Activated T-helper 1 cell treated with anti-CD3 and anti-CD28 coated beads, Interleukin-12 subunit alpha, Interleukin-12 subunit beta, Interleukin-2, Interleukin-4 antibody, amounts not matched to agents 30 ng/mL and 10 ng/mL and 1 ng/mL, durations not matched to agents 14 hours and 24 hours and 36 hours (primary cell): ENCODE measurements at regions of chr15 and their contacts with region 1.

Region 1: DNA sequence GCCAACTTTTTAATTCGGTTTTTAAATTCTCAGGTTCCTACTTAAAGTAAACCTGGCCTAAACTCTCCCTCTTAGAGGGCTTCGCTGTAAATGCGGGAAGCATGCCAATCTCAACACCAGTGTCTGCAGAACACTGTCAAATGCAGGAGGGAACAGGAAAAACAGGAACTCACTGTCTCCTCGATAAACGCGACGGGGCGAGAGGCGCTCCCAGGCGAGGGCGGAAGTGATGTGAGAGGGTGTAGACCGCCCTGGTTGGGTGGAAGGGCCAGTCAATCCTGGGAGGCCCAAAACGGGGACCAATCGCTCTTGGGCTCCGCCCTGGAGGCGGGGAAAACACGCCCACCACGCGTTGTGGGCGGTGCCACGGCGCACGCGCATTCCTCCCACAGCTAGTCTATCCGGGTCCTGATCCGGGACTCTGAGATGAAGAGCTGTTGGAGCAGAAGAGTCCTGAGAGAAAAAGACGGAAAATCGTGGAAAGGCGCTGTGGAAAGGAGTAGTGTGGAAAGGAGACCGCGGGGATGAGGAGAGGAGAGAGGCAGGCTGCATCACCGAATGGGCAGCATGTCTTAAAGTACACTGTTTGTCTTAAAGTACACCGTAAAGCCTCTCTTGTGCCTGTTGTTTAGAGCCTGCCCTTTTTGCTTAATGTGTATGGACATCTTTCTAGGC is 27.1 kb downstream of the SLC28A2 start:
- DNase-seq: peak; percentile 95
- H3K4me3 Mint-ChIP-seq: peak overlapping the region; percentile 90
- H3K27ac Mint-ChIP-seq: peak overlapping the region; percentile 77
- H3K4me1 Mint-ChIP-seq: peaks cover 7% of the 10 kb centered on the region
- H3K27me3 Mint-ChIP-seq: peaks cover 12% of the 10 kb centered on the region

Region 2: DNA sequence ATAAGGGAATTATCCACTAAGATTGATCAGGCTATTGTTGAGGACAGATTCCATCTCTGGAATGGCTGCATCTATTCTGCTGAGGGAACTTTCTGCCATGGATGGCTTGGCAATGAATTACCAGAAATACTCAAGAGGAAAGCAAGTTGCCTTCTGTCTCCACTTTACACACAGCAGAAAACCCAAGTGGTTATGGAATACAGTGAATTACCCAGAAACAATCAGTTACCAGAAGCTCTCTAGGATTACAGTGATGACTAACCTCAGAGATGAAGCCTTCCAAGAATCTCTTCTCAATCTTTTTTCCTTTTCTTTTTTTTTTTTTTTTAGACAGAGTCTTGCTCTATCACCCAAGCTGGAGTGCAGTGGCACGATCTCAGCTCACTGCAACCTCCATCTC is 1269.1 kb before region 1 on chr15:
- intact Hi-C with region 1: no loop called
- DNase-seq: no peak
- H3K4me3 Mint-ChIP-seq: no peak overlapping the region
- H3K27ac Mint-ChIP-seq: no peak overlapping the region
- H3K4me1 Mint-ChIP-seq: no peaks in the 10 kb centered on the region
- H3K27me3 Mint-ChIP-seq: peaks cover 9% of the 10 kb centered on the region

Region 3: DNA sequence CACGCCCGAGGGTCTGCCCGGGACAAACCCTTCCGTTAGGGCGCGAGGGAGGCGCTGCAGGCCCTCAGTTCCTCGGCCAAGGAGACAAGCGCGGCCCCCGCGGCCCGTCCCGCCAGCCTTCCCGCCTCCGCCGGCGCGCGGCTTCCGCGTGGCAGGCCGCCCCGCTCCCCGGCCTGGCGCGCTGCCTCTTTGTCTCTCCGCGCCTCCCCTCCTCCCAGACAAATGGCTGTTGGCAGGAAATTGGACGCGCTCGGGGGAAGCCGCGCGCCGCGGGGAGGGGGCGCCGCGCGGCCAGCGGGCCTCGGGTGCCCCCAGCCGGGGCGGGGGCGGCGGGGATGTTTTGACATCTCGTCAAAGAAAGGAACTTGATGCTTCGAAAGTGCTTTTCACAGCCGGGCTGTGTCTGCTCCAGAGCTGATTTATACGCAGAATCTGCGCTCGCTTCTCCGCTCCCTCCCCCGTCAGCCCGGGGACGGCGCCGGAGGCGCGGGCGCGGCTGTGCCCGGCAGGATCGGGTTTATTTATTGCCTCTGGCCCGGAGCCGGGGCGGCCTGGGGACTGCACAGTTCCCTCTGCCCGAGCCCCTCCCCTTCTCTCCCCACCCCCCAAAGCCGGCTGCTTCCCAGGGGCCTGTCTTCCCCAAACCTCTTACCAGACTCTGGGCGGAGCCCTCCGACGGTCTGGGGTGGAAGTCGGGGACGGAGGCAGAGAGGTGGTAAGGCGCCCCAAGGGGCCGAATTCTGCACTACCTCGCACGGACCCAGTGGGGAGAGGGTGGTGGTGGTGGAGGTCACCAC is 112.1 kb before region 1 on chr15:
- intact Hi-C with region 1: loop called (anchors 1 kb)
- DNase-seq: peak; percentile 77
- H3K4me3 Mint-ChIP-seq: peak overlapping the region; percentile 75
- H3K27ac Mint-ChIP-seq: peak overlapping the region; percentile 81
- H3K4me1 Mint-ChIP-seq: peaks cover 21% of the 10 kb centered on the region
- H3K27me3 Mint-ChIP-seq: no peaks in the 10 kb centered on the region

Region 4: GRCh38 chr15:45205192-45205591 is 74.0 kb before region 1 on chr15:
- intact Hi-C with region 1: loop called (anchors 1 kb)
- DNase-seq: peak; percentile 50
- H3K4me3 Mint-ChIP-seq: no peak overlapping the region
- H3K27ac Mint-ChIP-seq: peak overlapping the region; percentile 53
- H3K4me1 Mint-ChIP-seq: peaks cover 9% of the 10 kb centered on the region
- H3K27me3 Mint-ChIP-seq: peaks cover 18% of the 10 kb centered on the region

Region 5: GRCh38 chr15:45522328-45523160 is 243.4 kb after region 1 on chr15 and contains the start of gene SLC30A4:
- intact Hi-C with region 1: loop called (anchors 1 kb)
- DNase-seq: peak; percentile 68
- H3K4me3 Mint-ChIP-seq: peak within 1 kb of the TSS; percentile 88
- H3K27ac Mint-ChIP-seq: peak within 1 kb of the TSS; percentile 66
- H3K4me1 Mint-ChIP-seq: peaks cover 22% of the 10 kb centered on the region
- H3K27me3 Mint-ChIP-seq: peaks cover 25% of the 10 kb centered on the region
- total RNA-seq, gene SLC30A4: 1.6 and 2.1 TPM in 2 replicates

Region 6: DNA sequence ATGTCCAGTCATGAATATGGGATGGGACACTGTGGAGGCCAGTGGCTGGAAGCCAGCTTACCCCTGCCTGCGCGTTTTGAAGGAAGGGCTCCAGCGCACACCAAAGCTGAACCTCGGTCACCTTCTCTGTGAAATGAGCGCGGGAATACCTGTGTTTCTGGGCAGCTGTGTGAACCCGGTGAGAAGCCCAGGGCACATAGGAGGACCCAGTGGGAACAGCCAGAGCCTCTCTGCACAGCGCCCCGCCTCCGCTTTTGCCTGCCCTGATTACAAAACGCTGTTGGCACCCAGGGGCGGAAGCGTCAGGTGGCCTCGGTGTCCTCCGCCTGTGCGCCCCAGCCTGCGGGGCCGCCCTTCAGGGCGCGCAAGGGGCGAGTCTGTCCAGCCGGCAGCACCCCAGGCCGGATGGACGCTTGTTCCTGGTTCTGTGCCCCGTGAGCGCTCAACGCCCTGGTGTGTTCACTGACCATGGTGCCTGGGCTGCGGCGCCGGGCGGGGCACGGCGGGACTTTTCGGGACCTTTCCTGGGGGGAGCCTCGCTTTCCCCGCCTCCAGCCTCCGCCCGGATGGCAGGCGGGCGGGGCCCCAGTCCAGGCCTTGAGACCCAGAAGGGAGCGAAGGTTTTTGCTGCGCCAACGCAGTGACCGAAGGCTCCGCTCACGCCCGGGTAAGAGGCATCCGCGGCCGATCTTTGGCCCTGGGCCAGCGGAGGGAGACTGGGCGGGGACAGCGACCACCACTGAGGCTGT is 355.5 kb after region 1 on chr15 and contains the start of gene SQOR:
- intact Hi-C with region 1: loop called (anchors 1 kb)
- DNase-seq: peak; percentile 67
- H3K4me3 Mint-ChIP-seq: peak within 1 kb of the TSS; percentile 99
- H3K27ac Mint-ChIP-seq: peak within 1 kb of the TSS; percentile 94
- H3K4me1 Mint-ChIP-seq: peaks cover 50% of the 10 kb centered on the region
- H3K27me3 Mint-ChIP-seq: peaks cover 16% of the 10 kb centered on the region
- total RNA-seq, gene SQOR: 96.0 and 100 TPM in 2 replicates